AG04450 (cell line): ENCODE measurements at regions of chr4 and their contacts with region 1.

Region 1: GRCh38 chr4:147984065-147984777 is 252.3 kb downstream of the ARHGAP10 start:
- DNase-seq: peak; percentile 21
- H3K4me3 ChIP-seq: no peak overlapping the region
- H3K27ac ChIP-seq: no peak overlapping the region
- H3K27me3 ChIP-seq: no peaks in the 10 kb centered on the region
- CTCF ChIP-seq: peak; percentile 76

Region 2: DNA sequence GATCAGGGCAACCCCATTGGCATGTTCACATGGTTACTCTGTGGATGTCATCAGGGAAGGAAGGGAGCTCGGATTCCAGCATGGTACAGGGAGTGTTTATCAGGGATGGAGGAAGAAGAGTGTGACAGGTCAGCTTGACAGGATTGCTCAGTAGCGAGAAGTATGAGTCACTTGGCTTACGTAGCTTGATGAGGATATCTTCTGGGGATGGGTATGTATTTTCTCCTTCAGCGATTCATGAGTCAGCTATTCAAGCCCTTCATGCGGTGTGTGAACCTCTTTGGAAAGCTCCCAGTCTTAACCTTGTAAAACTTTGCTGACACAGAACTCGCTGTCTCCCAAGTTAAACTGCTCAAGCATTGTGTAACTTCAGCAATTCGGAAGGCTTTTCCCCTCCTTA is 23.1 kb after region 1 on chr4:
- CTCF ChIA-PET with region 1: interaction called, 11 read pairs
- POLR2A ChIA-PET with region 1: no interaction called
- DNase-seq: peak; percentile 91
- H3K4me3 ChIP-seq: no peak overlapping the region
- H3K27ac ChIP-seq: peak overlapping the region; percentile 21
- H3K27me3 ChIP-seq: no peaks in the 10 kb centered on the region
- CTCF ChIP-seq: no peak

Region 3: DNA sequence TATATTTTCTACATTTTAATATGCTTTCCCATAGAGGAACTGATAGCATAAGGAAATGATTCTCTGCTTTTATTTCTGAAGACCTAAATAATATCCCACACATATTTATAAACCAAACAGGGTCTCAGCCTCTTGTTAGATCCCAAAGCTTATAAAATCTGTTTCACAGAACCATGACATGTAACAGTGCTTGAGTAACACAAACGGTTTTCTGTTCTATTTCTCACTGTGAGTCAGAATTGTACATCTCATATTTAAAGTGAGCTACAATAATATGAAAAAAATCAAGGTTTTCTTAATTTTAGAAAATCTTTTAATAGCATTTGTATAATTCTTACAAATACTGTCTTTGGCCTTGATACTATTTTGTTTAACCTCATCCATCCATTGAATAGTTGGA is 406.8 kb after region 1 on chr4:
- CTCF ChIA-PET with region 1: no interaction called
- POLR2A ChIA-PET with region 1: no interaction called
- DNase-seq: no peak
- H3K4me3 ChIP-seq: no peak overlapping the region
- H3K27ac ChIP-seq: no peak overlapping the region
- H3K27me3 ChIP-seq: no peaks in the 10 kb centered on the region
- CTCF ChIP-seq: no peak